ENCODE measurements at regions of chr4 and their contacts with region 1.

Region 1: DNA sequence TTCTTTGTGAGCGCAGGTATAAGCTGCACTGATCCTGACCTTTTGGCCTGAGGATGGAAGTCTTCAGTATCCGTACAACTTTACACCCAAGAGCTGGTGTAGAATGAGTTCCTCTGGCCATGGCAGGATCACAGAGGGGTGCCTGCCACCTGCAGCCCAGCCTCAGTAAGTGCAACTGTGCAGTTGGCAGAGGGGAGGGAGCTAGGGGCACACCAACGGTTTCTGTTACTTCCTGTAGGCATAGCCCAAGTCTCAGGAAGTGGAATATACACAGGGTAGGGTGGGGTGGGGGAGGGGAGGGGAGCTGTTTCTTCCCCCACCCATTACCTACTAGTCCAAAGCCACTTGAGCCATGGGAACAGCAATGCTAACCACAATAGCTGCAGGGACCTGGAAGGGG is 85.4 kb upstream of the GBA3 start:
- DNase-seq: peak; percentile 35
- ATAC-seq: peak; percentile 100
- H3K4me3 ChIP-seq: no peak overlapping the region
- H3K27ac ChIP-seq: no peak overlapping the region
- H3K4me1 ChIP-seq: no peaks in the 10 kb centered on the region
- H3K27me3 ChIP-seq: 0 out of 5 replicates have a peak, but pooled peaks cover 0 to 5% of the 10 kb centered on the region in 2 experiments
- CTCF ChIP-seq: peak; percentile 85
- EP300 ChIP-seq: no peak
- POLR2A ChIP-seq: no peak
- RAD21 ChIP-seq: peak; percentile 53; the same call in 1 of the 2 replicates

Region 2: GRCh38 chr4:21765810-21766407 is 841.5 kb before region 1 on chr4:
- CTCF ChIA-PET with region 1: no interaction called
- POLR2A ChIA-PET with region 1: no interaction called
- in situ Hi-C with region 1: no loop called
- intact Hi-C with region 1: no loop called
- DNase-seq: peak; percentile 25
- ATAC-seq: peak; percentile 85
- H3K4me3 ChIP-seq: no peak overlapping the region
- H3K27ac ChIP-seq: no peak overlapping the region
- H3K4me1 ChIP-seq: no peaks in the 10 kb centered on the region
- H3K27me3 ChIP-seq: no peaks in the 10 kb centered on the region
- CTCF ChIP-seq: peak; percentile 78
- EP300 ChIP-seq: no peak
- POLR2A ChIP-seq: no peak
- RAD21 ChIP-seq: no peak

Region 3: DNA sequence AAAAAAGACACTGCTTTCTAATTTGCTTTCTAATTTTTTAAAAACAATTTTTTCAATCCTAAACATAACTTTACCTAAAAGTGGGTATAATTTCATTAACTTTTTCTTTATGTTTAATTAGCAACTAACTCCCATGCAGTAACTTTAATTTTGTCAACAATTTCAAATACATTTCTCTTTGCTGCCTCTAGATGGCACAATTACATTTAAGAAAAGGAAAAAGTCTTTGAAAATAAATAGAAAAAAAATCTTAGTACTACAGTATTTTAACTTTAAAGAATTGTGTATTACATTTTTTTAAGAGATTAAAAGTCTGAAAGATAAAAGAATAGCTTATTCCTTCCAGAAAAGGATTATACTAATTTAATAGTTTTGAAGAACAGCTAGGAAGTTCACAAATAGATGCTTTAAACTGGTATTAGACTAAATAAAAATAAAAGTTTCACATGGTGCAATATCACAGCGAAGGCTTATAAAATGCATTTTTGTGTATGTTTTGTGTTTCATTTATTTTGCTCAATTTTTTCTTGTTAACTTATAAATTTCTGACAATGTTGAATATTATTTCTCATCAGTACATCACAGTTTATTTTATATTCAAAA is 196.6 kb before region 1 on chr4:
- CTCF ChIA-PET with region 1: interaction called, 8 read pairs
- POLR2A ChIA-PET with region 1: no interaction called
- in situ Hi-C with region 1: loop called (anchors 5 kb)
- intact Hi-C with region 1: loop called (anchors 1 kb)
- DNase-seq: peak; percentile 14
- ATAC-seq: no peak
- H3K4me3 ChIP-seq: no peak overlapping the region
- H3K27ac ChIP-seq: no peak overlapping the region
- H3K4me1 ChIP-seq: no peaks in the 10 kb centered on the region
- H3K27me3 ChIP-seq: no peaks in the 10 kb centered on the region
- CTCF ChIP-seq: 0 out of 2 replicates have a peak, but pooled peaks have one; percentile 21
- EP300 ChIP-seq: no peak
- POLR2A ChIP-seq: no peak
- RAD21 ChIP-seq: no peak

Region 4: DNA sequence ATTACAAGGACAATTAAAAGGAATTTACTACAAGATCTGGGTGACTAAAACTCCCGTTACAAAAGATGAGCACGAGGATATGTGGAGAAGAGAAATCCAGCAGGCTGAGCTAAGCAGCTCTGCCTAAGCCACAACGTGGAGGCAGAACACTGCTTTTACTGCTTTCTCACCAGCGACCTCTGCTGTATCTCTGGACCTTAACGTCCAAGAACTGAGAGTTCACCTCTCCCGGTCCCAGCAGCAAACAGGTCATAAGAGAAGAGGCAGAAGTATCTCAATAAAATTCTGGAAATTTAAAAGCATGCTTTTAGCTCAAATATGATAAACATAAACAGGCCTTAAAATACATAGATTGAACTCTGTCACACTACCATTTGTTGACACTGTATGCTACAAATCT is 172.5 kb before region 1 on chr4:
- CTCF ChIA-PET with region 1: no interaction called
- POLR2A ChIA-PET with region 1: no interaction called
- in situ Hi-C with region 1: no loop called
- intact Hi-C with region 1: loop called (anchors 1 kb)
- DNase-seq: peak; percentile 59
- ATAC-seq: peak; percentile 99
- H3K4me3 ChIP-seq: no peak overlapping the region
- H3K27ac ChIP-seq: no peak overlapping the region
- H3K4me1 ChIP-seq: peaks cover 26% of the 10 kb centered on the region
- H3K27me3 ChIP-seq: no peaks in the 10 kb centered on the region
- CTCF ChIP-seq: peak; percentile 73
- EP300 ChIP-seq: no peak
- POLR2A ChIP-seq: no peak
- RAD21 ChIP-seq: peak; percentile 37; the same call in 1 of the 2 replicates

Region 5: GRCh38 chr4:22483551-22483981 is 123.8 kb before region 1 on chr4:
- CTCF ChIA-PET with region 1: no interaction called
- POLR2A ChIA-PET with region 1: no interaction called
- in situ Hi-C with region 1: no loop called
- intact Hi-C with region 1: no loop called
- DNase-seq: no peak
- ATAC-seq: no peak
- H3K4me3 ChIP-seq: no peak overlapping the region
- H3K27ac ChIP-seq: no peak overlapping the region
- H3K4me1 ChIP-seq: peaks cover 42% of the 10 kb centered on the region
- H3K27me3 ChIP-seq: no peaks in the 10 kb centered on the region
- CTCF ChIP-seq: no peak
- EP300 ChIP-seq: no peak
- POLR2A ChIP-seq: no peak
- RAD21 ChIP-seq: no peak

Region 6: DNA sequence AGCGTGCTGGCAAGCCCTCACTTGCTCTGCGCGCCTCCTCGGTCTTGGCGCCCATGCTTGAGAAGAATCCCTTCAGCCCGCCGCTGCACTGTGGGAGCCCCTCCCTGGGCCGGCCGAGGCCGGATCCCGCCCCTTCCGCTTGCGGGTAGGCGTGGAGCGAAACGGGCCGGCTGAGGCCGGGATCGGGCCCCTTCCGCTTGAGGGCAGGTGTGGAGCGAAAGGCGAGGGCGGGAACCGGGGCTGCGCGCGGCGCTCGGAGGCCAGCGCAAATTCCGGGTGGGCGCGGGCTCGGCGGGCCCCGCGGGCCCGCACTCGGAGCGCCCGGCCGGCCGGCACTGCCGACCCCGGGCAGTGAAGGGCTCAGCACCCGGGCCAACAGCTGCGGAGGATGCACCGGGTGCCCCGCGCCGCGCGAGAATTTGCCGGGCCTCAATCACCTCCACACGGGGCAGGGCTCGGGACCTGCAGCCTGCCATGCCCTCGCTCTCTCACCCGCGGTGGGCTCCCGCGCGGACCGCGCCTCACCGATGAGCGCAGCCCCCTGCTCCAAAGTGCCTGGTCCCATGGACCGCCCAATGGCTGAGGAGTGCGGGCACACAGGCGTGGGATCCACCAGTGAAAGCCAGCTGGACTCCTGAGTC is 27.3 kb after region 1 on chr4:
- CTCF ChIA-PET with region 1: no interaction called
- POLR2A ChIA-PET with region 1: no interaction called
- in situ Hi-C with region 1: no loop called
- intact Hi-C with region 1: no loop called
- DNase-seq: no peak
- ATAC-seq: no peak
- H3K4me3 ChIP-seq: no peak overlapping the region
- H3K27ac ChIP-seq: no peak overlapping the region
- H3K4me1 ChIP-seq: no peaks in the 10 kb centered on the region
- H3K27me3 ChIP-seq: no peaks in the 10 kb centered on the region
- CTCF ChIP-seq: no peak
- EP300 ChIP-seq: no peak
- POLR2A ChIP-seq: no peak
- RAD21 ChIP-seq: no peak

Region 7: GRCh38 chr4:22661424-22661823 is 54.0 kb after region 1 on chr4:
- CTCF ChIA-PET with region 1: no interaction called
- POLR2A ChIA-PET with region 1: no interaction called
- in situ Hi-C with region 1: no loop called
- intact Hi-C with region 1: no loop called
- DNase-seq: no peak
- ATAC-seq: no peak
- H3K4me3 ChIP-seq: no peak overlapping the region
- H3K27ac ChIP-seq: no peak overlapping the region
- H3K4me1 ChIP-seq: no peaks in the 10 kb centered on the region
- H3K27me3 ChIP-seq: no peaks in the 10 kb centered on the region
- CTCF ChIP-seq: no peak
- EP300 ChIP-seq: no peak
- POLR2A ChIP-seq: no peak
- RAD21 ChIP-seq: no peak